ENCODE measurements at regions of chr15 and their contacts with region 1.

Region 1: GRCh38 chr15:37581885-37582532 is 352.4 kb upstream of the TMCO5A start:
- DNase-seq: no peak

Region 2: GRCh38 chr15:37517191-37517895 is 64.7 kb before region 1 on chr15:
- intact Hi-C with region 1: loop called in 1 of 2 experiments (anchors 2 kb)
- DNase-seq: no peak

Measured in posterior vena cava (tissue), 2 donors.